Left ventricle myocardium superior (tissue), 1 donor: ENCODE measurements at regions of chr18 and their contacts with region 1.

Region 1: GRCh38 chr18:71362143-71362542 is 1073.3 kb downstream of the SOCS6 start:
- DNase-seq: no peak
- ATAC-seq: no peak

Region 2: DNA sequence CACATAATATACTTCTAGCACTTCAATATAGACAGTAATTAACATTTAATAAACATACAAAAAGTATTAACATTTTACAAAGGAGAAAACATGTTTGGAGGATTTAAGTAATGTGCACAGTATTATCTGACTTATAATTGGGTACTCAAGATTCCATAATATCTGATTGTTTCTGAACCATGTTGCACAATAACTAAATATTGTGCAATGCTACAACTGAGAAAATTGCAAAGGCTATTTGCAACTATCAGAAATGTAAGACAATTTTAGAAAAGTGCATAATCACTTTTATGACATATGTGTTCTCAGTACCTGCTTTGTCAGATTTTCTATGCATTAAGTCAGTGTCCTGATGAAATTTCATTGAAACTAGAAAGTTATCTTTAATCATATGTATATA is 138.7 kb before region 1 on chr18:
- intact Hi-C with region 1: no loop called
- DNase-seq: no peak
- ATAC-seq: no peak

Region 3: DNA sequence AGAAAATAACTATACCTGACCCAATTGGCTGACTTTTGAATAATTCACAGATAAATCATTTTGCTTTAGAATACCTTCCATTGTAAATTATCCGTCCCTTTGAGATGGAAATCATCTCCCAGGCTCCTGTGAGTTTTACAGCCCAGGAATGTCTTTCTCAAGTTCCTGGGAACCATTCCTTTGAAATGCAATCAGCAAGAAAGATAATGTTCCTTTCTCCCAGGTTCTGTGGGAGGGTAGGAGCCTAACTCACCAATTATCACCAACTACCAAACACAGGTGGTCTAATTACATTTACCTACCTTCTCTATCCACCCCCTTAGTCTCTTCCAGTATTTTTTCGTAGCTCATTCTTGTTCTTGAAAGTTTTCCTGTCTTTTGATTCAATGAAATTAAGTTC is 57.3 kb before region 1 on chr18:
- intact Hi-C with region 1: loop called (anchors 10 kb)
- DNase-seq: no peak
- ATAC-seq: no peak